AG04450 (cell line): ENCODE measurements at regions of chr3 and their contacts with region 1.

Region 1: GRCh38 chr3:42535981-42536790 is 33.7 kb downstream of the VIPR1 start:
- DNase-seq: no peak
- H3K4me3 ChIP-seq: no peak overlapping the region
- H3K27ac ChIP-seq: no peak overlapping the region
- H3K27me3 ChIP-seq: peaks cover 14% of the 10 kb centered on the region
- CTCF ChIP-seq: peak; percentile 43

Region 2: DNA sequence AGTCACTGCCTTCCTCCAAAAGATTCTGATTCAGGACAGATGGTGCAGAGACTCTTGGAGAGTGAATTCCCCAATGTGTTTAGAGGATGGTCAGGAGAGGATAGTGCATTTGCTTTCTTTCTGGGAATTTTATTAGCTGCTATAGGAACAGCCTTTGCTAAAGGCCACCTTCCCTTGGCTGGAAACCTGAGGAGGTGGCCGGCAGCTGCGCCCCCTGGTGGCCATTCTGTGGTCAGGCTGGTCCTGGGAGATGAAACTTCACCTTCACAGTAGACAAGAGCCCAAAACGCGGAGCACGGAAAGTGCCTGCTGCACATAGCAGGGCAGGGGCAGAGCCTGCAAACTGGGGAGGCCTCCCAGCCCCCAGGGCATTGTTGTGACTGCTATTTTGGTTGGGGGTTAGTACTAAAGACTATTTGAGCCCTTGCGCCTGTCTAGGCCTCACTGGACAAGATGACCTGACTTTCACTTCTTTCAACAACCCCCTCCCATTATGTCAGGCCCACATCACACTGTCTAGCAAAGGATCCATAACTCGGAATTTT is 11.3 kb after region 1 on chr3:
- CTCF ChIA-PET with region 1: interaction called, 29 read pairs
- POLR2A ChIA-PET with region 1: no interaction called
- DNase-seq: peak; percentile 13
- H3K4me3 ChIP-seq: no peak overlapping the region
- H3K27ac ChIP-seq: no peak overlapping the region
- H3K27me3 ChIP-seq: peaks cover 4% of the 10 kb centered on the region
- CTCF ChIP-seq: peak; percentile 94

Region 3: DNA sequence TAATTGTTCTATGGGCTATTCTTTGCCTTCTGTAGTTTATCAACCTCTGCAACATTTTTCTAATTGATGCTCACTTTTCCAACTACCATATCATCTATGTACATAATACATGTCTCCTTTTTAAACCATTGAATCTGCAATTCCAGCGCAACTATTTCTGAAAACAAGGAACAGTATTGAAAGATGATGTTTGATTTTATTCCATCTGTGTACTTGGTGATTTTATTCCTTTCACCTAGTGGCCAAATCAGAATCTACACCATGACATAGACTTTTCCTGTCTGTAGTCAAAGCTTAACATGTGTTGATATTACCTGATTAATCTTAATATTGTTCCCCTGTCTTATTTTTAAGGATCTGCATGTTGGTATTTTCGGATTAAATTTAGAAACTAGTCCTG is 77.3 kb after region 1 on chr3:
- CTCF ChIA-PET with region 1: no interaction called
- POLR2A ChIA-PET with region 1: no interaction called
- DNase-seq: no peak
- H3K4me3 ChIP-seq: no peak overlapping the region
- H3K27ac ChIP-seq: no peak overlapping the region
- H3K27me3 ChIP-seq: no peaks in the 10 kb centered on the region
- CTCF ChIP-seq: peak; percentile 48